ENCODE measurements at regions of chr5 and their contacts with region 1.

Region 1: DNA sequence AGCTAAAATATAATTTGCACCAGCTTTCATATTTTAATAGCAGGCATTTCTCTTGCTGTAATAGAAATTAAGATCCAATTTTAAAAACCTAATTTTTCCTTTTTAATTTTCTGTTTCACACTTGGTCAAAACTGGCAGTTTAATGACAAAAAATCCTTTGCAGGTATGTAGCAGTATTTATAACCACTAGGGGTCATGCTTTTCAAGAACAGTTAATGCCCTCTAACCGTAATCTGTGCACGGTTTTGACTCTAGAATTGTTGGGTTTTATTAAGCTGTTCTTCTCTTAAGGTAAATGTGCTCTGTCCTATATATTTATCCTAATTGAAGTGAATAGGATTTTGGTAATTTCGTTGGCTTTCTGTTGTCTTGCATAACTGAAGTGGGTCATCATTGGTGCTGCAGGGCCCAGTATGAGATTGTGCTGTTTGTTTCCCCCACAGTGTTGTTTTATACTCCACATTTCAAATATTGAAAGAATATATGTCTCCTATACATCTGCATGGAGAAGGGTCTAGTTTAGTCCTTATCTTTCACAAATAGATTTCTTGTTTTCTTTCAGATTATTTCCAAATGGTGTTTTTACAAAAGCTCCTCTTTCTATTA is 107.4 kb downstream of the SCAMP1 start:
- DNase-seq: no peak
- H3K4me3 Mint-ChIP-seq: no peak overlapping the region
- H3K27ac Mint-ChIP-seq: no peak overlapping the region
- H3K4me1 Mint-ChIP-seq: peaks cover 16% of the 10 kb centered on the region
- H3K27me3 Mint-ChIP-seq: no peaks in the 10 kb centered on the region
- CTCF ChIP-seq: peak; percentile 66

Region 2: DNA sequence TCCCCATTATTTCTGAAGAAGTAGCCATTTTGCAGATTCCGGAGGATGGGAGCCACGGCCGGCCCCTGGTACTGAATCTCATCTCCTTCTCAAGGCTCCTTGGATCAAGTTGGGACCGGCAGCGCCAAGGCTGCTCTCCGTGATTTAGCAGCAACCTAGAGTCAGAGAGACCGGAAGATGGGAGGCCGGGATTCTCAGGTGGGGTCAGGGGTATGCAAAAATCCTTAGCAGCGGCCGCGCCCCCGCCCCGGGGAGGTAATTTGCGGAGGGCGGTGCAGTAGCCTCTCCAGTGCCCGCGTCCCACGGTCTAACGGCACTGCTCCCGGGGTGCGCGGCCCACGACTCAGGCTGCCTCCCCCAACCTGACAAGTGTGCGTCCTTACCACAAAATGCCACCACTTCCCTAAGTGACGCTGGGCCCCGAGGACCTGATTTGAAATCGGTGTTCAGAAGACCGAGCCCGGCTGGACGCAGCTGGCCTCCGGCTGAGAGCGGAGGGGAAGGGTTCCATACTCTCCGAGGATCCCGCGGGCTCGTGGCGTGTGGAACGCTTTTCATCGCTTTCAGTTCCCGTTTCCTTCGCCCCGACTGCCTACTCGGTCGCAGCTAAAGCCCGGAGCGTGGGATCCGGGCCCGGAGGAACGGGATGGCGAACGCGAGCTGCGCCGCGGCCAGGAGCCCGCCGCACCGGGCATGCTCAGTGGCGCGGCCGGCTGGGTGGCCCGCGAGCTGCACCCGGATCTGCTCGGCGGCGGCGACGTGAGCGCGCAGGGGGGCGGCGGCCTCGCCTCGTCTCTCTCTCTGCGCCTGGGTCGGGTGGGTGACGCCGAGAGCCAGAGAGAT is 107.8 kb before region 1 on chr5 and contains the start of gene SCAMP1:
- CTCF ChIA-PET with region 1: no interaction called
- intact Hi-C with region 1: loop called (anchors 5 kb)
- DNase-seq: peak; percentile 98
- H3K4me3 Mint-ChIP-seq: peak within 1 kb of the TSS; percentile 92
- H3K27ac Mint-ChIP-seq: peak within 1 kb of the TSS; percentile 93
- H3K4me1 Mint-ChIP-seq: peaks cover 48% of the 10 kb centered on the region
- H3K27me3 Mint-ChIP-seq: no peaks in the 10 kb centered on the region
- CTCF ChIP-seq: no peak
- total RNA-seq, gene SCAMP1: 59.5 and 62.2 TPM in 2 replicates

Region 3: GRCh38 chr5:78518365-78519197 is 50.7 kb after region 1 on chr5:
- CTCF ChIA-PET with region 1: no interaction called
- intact Hi-C with region 1: loop called (anchors 5 kb)
- DNase-seq: peak; percentile 79
- H3K4me3 Mint-ChIP-seq: peak overlapping the region; percentile 22
- H3K27ac Mint-ChIP-seq: peak overlapping the region; percentile 16
- H3K4me1 Mint-ChIP-seq: peaks cover 48% of the 10 kb centered on the region
- H3K27me3 Mint-ChIP-seq: no peaks in the 10 kb centered on the region
- CTCF ChIP-seq: no peak

Region 4: DNA sequence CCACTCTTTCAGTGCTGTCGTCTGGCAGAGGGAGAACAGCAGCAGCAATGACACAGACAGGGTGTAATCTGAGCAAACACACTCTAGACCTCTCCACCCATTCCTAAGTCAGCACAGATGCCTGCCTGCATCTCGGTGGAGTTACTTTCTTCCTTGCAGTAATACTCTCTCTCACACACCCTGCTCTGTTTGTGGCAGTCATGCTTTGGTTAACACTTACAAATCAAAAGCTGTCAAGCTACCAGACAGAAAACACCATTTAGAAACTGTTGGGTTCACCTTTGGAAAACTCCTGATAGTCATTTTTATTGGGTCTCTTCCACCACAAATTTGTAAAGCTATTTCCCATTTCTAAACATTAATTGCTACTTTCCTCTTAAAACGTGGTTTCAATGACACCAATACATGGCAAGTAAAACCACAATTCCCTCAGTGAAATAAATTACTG is 153.5 kb after region 1 on chr5:
- CTCF ChIA-PET with region 1: no interaction called
- intact Hi-C with region 1: loop called (anchors 5 kb)
- DNase-seq: no peak
- H3K4me3 Mint-ChIP-seq: no peak overlapping the region
- H3K27ac Mint-ChIP-seq: peak overlapping the region; percentile 48
- H3K4me1 Mint-ChIP-seq: peaks cover 53% of the 10 kb centered on the region
- H3K27me3 Mint-ChIP-seq: no peaks in the 10 kb centered on the region
- CTCF ChIP-seq: no peak

Region 5: GRCh38 chr5:78964887-78965286 is 497.0 kb after region 1 on chr5:
- CTCF ChIA-PET with region 1: interaction called, 3 read pairs
- intact Hi-C with region 1: loop called (anchors 5 kb)
- DNase-seq: peak; percentile 27
- H3K4me3 Mint-ChIP-seq: no peak overlapping the region
- H3K27ac Mint-ChIP-seq: no peak overlapping the region
- H3K4me1 Mint-ChIP-seq: no peaks in the 10 kb centered on the region
- H3K27me3 Mint-ChIP-seq: no peaks in the 10 kb centered on the region
- CTCF ChIP-seq: no peak